ENCODE measurements at regions of chr1 and their contacts with region 1.

Region 1: DNA sequence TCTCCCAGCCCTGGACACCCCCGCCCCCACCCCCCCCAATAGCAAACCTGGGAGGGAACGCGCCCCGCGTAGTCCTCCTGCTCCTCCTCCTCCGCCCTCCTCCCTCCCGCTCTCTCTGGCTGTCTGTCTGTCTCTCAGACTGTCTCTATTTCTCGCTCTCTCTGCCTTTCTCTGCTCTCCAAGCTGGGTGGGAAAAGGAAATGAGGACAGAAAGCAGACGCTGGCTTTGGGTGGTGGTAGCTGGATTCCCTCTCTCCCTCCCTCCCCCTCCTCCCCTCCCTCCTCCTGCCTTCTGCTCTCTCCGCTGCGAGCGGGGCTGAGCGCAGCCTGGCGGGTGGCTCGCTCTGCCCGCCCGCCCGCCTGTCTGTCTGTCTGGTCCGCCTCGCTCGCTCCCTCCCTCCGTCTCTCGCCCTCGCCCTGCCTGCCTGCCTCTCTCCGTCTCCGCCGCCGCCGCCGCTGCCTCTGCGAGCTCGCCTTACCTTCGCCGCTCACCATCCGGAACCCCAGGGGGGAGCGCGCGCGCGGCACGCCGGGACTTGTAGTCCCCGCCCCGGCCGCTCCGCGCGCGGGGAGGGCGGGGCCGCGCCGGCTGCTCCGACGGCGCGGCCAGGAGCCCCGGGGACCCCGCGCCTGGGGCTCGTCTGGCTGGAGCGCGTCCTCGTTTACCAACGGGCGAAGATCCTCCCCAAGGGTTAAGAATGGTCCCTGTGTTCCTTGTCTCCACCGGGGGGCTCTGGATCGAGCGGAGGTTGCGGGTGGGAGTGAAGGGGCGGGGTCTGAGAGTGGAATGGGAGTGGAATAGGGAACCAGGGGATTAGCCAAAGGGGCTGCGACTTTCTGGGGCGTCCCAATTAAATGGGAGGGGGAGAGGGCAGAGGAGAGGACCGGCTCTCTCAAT is at the start of gene AHDC1:
- DNase-seq: peak; percentile 93 to 95 (median 94)
- ATAC-seq: peak; percentile 85
- H3K4me3 ChIP-seq: peak within 1 kb of the TSS; percentile 50
- H3K4me1 ChIP-seq: peaks cover 21% of the 10 kb centered on the region
- CTCF ChIP-seq: no peak
- total RNA-seq, gene AHDC1: 13.7 to 58.6 (median 18.7) TPM

Region 2: GRCh38 chr1:27402349-27402754 is 201.6 kb before region 1 on chr1:
- intact Hi-C with region 1: loop called in 1 of 2 experiments (anchors 5 kb)
- DNase-seq: peak; percentile 80 to 83 (median 83)
- ATAC-seq: peak; percentile 75
- H3K4me3 ChIP-seq: no peak overlapping the region
- H3K4me1 ChIP-seq: peaks cover 32% of the 10 kb centered on the region
- CTCF ChIP-seq: peak; percentile 49

Region 3: GRCh38 chr1:27416387-27417111 is 187.4 kb before region 1 on chr1:
- intact Hi-C with region 1: loop called in 1 of 2 experiments (anchors 10 kb)
- DNase-seq: peak in 1 of 3 donors; percentile 78
- ATAC-seq: peak; percentile 73
- H3K4me3 ChIP-seq: no peak overlapping the region
- H3K4me1 ChIP-seq: peaks cover 6% of the 10 kb centered on the region
- CTCF ChIP-seq: no peak

Region 4: DNA sequence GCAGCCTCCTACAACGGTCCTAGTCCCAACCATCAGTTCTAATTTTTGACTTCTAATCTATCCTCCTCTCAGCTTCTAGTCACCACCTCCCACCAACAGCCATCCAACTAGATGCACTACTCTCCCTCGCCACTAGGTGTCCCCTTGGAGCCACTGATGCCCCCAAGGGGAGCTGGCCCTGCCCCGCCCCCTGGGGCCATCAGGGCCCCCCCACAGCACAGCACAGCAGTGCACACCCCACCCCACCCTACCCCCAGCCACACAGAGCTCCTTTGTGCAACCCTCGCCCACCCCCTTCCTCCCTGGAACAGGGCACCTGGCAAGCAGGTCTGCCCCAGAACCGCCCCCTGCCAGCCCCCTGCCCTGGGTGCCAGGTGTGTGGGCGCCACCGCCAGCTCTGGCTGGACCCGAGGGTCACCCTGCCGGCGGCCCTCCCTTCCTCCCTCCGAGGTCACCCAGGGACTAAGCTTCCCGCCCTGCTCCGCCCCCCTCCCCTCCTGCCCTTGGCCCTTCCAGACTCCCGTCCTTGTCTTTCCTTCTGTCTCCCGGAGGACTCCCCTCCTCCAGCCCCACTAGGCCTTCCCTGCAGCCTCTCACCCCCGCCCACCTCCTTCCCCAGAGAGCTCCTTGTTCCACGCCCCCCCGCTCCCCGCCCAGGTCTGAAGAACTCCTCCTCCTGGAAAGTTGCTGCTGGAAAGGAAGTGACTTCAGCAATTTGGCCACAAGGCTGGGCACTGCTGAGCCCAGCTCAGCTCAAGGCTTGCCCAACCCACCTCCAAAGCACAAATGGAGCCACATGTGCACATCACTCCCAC is 46.9 kb before region 1 on chr1:
- intact Hi-C with region 1: loop called in 1 of 2 experiments (anchors 5 kb)
- DNase-seq: peak; percentile 92 to 95 (median 93)
- ATAC-seq: peak; percentile 76
- H3K4me3 ChIP-seq: no peak overlapping the region
- H3K4me1 ChIP-seq: peaks cover 25% of the 10 kb centered on the region
- CTCF ChIP-seq: peak; percentile 96

Region 5: GRCh38 chr1:27662707-27663393 is 58.9 kb after region 1 on chr1:
- intact Hi-C with region 1: loop called (anchors 5 kb)
- DNase-seq: peak; percentile 80 to 93 (median 86)
- ATAC-seq: peak; percentile 79
- H3K4me3 ChIP-seq: no peak overlapping the region
- H3K4me1 ChIP-seq: peaks cover 8% of the 10 kb centered on the region
- CTCF ChIP-seq: peak; percentile 73

Region 6: DNA sequence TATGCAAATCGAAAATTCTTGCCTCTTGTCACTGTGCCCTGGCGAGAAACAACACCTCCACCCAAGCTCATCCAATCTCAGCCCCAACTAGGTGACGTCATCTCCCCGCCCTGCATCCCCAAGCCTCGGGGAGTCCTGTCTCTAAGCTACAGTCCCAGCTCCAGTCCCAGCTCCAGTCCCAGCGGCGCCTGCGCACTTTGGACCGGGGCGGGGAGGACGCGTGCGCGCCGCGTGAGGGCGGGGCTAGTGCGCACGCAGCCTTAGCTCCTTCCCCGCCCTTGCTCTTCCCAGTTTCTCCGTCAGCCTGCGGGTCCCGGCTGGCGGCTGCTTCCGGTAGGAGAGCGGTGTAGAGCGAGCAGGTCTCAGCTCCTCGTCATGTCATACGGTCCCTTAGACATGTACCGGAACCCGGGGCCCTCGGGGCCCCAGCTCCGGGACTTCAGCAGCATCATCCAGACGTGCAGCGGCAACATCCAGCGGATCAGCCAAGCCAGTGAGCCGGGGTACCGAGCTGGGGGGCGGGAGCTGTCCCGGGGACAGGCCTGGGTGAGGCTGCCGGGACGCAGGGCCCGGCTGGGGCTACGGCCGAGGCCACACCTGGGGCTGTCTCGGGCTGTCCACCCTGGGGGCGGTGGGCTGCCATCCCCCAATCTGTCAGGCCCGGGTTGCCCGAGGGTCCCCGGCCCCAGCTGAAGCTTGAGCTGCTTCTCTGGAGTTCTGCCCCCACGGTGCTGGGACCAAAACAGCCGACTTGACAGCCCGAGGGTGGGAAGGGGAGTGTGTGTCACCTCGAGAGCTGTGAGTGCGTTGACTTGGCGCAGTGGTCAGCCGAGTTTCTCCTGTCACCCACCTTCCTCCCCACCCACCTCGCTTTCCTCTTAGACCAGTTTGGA is 169.2 kb after region 1 on chr1 and contains the start of gene STX12:
- intact Hi-C with region 1: no loop called
- DNase-seq: peak; percentile 98 to 99 (median 99)
- ATAC-seq: peak; percentile 99
- H3K4me3 ChIP-seq: peak within 1 kb of the TSS; percentile 87
- H3K4me1 ChIP-seq: peaks cover 9% of the 10 kb centered on the region
- CTCF ChIP-seq: no peak
- total RNA-seq, gene STX12: 58.1 to 64.9 (median 61.8) TPM

Region 7: GRCh38 chr1:28232558-28233263 is 628.8 kb after region 1 on chr1 and contains the start of gene DNAJC8:
- intact Hi-C with region 1: no loop called
- DNase-seq: peak; percentile 95 to 98 (median 97)
- ATAC-seq: peak; percentile 68
- H3K4me3 ChIP-seq: peak within 1 kb of the TSS; percentile 92
- H3K4me1 ChIP-seq: peaks cover 47% of the 10 kb centered on the region
- CTCF ChIP-seq: no peak
- total RNA-seq, gene DNAJC8: 41.6 to 76.7 (median 56.7) TPM